MCF 10A (cell line): ENCODE measurements at regions of chr2 and their contacts with region 1.

Region 1: DNA sequence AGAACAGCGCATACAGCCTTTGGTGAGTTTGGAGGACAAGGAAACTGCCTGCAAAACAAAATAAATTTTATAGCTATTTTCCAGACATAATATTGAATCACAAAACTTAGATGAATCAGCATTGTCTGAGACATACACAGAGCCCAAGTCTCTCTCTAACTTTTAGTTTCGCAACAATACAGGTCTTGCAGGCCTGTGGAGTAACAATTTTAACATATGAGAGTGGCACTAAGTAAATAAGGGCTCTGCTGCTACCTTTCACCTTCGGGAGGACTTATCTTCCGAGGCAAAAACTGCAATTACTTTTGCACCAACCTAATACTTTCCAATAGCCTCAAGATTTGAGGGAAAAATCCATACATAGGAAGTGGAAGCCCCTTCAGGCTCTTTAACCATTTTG is 56.0 kb upstream of the PEX13 start:
- DNase-seq: peak; percentile 84
- H3K4me3 Mint-ChIP-seq: no peak overlapping the region
- H3K27ac Mint-ChIP-seq: peak overlapping the region; percentile 71
- H3K4me1 Mint-ChIP-seq: peaks cover 21% of the 10 kb centered on the region
- H3K27me3 Mint-ChIP-seq: no peaks in the 10 kb centered on the region
- CTCF ChIP-seq: no peak

Region 2: DNA sequence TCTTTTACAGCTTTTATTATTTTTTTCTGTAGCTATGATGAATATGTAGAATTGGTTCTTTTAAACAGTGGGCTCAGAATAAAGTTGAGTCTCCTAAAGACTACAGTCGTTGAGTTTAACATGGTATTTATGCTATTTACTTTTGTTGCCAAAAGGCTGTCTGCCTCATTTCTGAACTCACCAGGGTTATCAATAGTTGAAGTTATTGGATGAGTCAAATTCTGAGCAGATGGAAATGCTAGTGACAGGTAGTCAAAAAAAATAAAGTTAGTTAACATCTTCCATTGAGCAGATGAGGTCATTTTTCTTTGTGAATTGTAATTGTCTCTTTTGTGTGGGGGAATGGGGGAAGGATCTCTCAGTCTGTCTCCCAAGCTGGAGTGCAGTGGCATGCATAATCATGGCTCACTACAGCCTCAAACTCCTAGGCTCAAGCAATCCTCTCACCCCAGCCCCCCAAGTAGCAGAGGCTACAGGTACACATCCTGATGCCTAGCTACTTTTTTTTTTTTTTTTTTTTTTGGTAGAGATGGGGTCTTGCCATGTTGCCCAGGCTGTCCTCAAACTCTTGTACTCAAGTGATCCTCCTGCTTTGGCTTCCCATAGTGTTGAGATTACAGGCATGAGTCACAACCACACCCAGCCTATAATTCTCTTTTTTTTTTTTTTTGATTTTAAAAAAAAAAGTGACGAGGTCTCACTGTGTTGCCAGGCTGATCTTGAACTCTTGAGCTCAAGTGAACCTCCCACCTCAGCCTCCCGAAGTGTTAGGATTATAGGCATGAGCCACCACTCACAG is 196.6 kb before region 1 on chr2:
- CTCF ChIA-PET with region 1: no interaction called
- POLR2A ChIA-PET with region 1: no interaction called
- intact Hi-C with region 1: no loop called
- DNase-seq: peak; percentile 37
- H3K4me3 Mint-ChIP-seq: no peak overlapping the region
- H3K27ac Mint-ChIP-seq: no peak overlapping the region
- H3K4me1 Mint-ChIP-seq: no peaks in the 10 kb centered on the region
- H3K27me3 Mint-ChIP-seq: no peaks in the 10 kb centered on the region
- CTCF ChIP-seq: no peak

Region 3: GRCh38 chr2:60804414-60804851 is 157.1 kb before region 1 on chr2:
- CTCF ChIA-PET with region 1: no interaction called
- POLR2A ChIA-PET with region 1: no interaction called
- intact Hi-C with region 1: no loop called
- DNase-seq: no peak
- H3K4me3 Mint-ChIP-seq: no peak overlapping the region
- H3K27ac Mint-ChIP-seq: no peak overlapping the region
- H3K4me1 Mint-ChIP-seq: no peaks in the 10 kb centered on the region
- H3K27me3 Mint-ChIP-seq: no peaks in the 10 kb centered on the region
- CTCF ChIP-seq: no peak

Region 4: DNA sequence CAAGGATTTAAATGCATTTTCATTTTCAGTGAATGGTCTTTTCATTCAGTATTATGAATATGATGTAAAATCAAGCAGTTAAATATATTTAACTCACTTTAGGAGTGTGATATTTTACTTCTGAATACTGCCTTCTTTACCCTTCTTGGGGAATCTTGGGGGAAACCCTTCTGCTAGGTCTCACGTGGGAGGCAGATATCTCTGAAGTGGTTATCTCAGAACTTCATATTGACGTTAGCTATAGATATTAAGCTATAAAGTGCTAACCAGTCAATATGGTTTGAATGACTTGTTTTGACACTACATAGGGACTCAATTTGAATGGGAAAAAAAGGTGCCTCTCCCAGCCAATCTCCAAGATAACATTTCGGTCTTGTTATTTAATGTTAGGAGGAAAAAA is 70.3 kb before region 1 on chr2:
- CTCF ChIA-PET with region 1: no interaction called
- POLR2A ChIA-PET with region 1: interaction called, 38 read pairs
- intact Hi-C with region 1: no loop called
- DNase-seq: no peak
- H3K4me3 Mint-ChIP-seq: no peak overlapping the region
- H3K27ac Mint-ChIP-seq: no peak overlapping the region
- H3K4me1 Mint-ChIP-seq: peaks cover 35% of the 10 kb centered on the region
- H3K27me3 Mint-ChIP-seq: no peaks in the 10 kb centered on the region
- CTCF ChIP-seq: no peak